ENCODE measurements at regions of chr9 and their contacts with region 1.

Region 1: DNA sequence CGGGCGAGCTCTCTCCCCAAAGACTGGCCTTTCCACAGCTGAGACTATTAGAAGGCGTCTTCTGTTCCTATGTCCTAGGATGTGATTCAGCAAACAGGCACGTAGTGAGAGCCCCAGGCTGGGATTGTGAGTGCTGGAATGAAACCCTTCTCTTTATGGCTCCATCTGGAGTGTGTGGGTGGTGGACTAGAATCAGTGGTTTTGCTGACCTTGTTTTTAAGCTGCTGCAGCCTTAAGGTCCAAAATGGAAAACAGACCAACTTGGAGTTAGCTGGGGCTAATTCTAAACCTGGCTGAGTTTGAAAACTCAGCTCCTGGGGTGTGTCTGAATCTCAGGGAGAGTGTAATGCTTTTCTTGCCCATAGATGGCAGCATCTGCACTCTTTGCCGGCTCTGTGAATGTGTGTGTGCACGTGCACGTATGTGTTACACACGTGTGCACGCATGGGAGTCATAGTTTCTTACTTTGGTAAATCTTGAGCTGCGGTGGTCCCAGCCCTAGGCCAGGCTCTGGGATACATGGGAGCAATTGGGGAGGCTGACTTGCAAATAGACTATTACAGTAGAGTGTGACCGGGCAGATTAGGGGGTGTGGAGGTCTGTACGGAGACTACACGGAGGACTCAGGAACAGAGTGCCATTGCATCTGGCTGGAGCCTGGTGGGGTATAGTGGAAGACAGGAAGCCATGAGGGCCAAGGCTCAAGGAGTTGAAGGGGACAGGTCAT is 10.7 kb downstream of the GSN start:
- DNase-seq: peak; percentile 65
- H3K4me3 Mint-ChIP-seq: no peak overlapping the region
- H3K27ac Mint-ChIP-seq: no peak overlapping the region
- H3K4me1 Mint-ChIP-seq: peaks cover 3% of the 10 kb centered on the region
- H3K27me3 Mint-ChIP-seq: no peaks in the 10 kb centered on the region

Region 2: DNA sequence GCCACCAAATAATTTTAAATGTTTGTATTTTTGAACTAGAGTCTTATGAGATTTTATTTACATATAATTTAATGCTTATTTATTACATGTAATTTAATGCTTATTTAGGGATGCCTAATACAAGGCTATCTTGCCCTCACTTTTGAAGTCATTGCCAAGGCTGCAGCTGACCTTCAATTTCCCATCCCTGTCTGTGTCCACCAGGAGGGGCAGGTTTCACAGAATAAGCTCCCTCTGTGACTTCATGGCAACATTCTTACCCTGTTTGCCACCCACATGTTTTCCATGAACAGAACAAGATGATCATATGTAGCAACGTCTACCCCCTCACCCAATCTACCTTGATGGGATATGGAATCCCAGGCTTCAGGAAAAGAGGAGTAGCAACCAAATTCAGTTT is 255.6 kb before region 1 on chr9:
- CTCF ChIA-PET with region 1: no interaction called
- intact Hi-C with region 1: no loop called
- DNase-seq: no peak
- H3K4me3 Mint-ChIP-seq: no peak overlapping the region
- H3K27ac Mint-ChIP-seq: no peak overlapping the region
- H3K4me1 Mint-ChIP-seq: no peaks in the 10 kb centered on the region
- H3K27me3 Mint-ChIP-seq: no peaks in the 10 kb centered on the region

Region 3: DNA sequence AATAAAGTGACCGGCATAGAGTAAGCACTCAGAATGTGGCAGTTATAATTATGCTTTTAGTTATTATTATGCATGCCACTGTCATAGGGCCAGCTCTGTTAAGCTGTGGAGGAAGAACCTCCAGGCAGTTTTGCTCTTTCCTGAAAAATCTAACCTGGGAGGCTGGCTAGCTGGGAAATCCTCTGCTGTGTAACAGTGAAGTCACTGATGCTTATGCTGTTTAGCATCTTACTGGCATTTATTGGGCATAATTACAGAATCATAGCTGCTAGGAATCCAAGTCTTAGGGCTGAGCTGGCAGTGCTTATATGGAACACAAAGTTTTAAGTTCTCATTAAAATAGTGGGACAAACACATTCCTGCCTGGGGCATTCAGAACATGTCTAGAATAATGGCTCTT is 16.3 kb before region 1 on chr9:
- CTCF ChIA-PET with region 1: interaction called, 14 read pairs
- intact Hi-C with region 1: no loop called
- DNase-seq: no peak
- H3K4me3 Mint-ChIP-seq: no peak overlapping the region
- H3K27ac Mint-ChIP-seq: no peak overlapping the region
- H3K4me1 Mint-ChIP-seq: no peaks in the 10 kb centered on the region
- H3K27me3 Mint-ChIP-seq: peaks cover 3% of the 10 kb centered on the region

Region 4: GRCh38 chr9:121267689-121268597 is 10.8 kb before region 1 on chr9 and contains the start of gene GSN:
- CTCF ChIA-PET with region 1: interaction called, 14 read pairs
- intact Hi-C with region 1: no loop called
- DNase-seq: peak; percentile 51
- H3K4me3 Mint-ChIP-seq: peak within 1 kb of the TSS; percentile 61
- H3K27ac Mint-ChIP-seq: no peak within 1 kb of the TSS
- H3K4me1 Mint-ChIP-seq: peaks cover 10% of the 10 kb centered on the region
- H3K27me3 Mint-ChIP-seq: peaks cover 18% of the 10 kb centered on the region
- total RNA-seq, gene GSN: 1.1 to 1.2 TPM

Region 5: DNA sequence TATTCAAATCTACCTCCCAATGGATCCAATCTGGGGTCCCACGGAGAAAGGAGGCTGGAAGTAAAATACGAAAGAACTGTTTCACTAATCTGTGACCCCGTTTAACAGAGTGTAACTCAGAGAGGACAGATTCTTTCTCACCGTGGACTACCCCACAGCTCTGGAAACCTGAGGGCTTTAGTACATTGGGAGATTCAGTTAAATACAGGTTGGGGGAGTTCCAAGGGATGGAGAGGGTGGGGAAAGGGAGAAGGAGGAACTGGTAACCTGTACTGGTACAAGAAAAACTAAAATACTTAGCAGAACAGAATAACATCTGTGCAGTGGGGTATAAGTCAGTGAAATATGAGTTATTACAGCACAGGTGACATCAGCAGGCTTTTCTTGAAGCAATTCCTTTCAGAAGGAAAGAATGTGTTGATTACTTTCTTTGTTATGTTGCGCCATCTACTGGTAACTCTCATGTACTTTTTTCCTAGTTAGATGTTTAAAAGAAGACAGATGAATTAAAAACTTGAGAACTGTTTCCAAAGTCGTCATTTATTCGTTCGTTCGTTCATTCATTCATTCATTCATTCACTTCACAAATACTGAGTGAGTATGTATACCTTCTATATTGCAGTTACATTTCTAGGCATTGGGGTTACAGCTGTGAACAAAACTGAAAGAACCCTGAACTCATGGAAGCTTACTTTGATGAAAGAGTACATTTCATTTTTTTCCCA is 121.3 kb after region 1 on chr9:
- CTCF ChIA-PET with region 1: interaction called, 4 read pairs
- intact Hi-C with region 1: loop called (anchors 1 kb)
- DNase-seq: no peak
- H3K4me3 Mint-ChIP-seq: no peak overlapping the region
- H3K27ac Mint-ChIP-seq: no peak overlapping the region
- H3K4me1 Mint-ChIP-seq: no peaks in the 10 kb centered on the region
- H3K27me3 Mint-ChIP-seq: no peaks in the 10 kb centered on the region